AG04449 (cell line): ENCODE measurements at regions of chr17 and their contacts with region 1.

Region 1: DNA sequence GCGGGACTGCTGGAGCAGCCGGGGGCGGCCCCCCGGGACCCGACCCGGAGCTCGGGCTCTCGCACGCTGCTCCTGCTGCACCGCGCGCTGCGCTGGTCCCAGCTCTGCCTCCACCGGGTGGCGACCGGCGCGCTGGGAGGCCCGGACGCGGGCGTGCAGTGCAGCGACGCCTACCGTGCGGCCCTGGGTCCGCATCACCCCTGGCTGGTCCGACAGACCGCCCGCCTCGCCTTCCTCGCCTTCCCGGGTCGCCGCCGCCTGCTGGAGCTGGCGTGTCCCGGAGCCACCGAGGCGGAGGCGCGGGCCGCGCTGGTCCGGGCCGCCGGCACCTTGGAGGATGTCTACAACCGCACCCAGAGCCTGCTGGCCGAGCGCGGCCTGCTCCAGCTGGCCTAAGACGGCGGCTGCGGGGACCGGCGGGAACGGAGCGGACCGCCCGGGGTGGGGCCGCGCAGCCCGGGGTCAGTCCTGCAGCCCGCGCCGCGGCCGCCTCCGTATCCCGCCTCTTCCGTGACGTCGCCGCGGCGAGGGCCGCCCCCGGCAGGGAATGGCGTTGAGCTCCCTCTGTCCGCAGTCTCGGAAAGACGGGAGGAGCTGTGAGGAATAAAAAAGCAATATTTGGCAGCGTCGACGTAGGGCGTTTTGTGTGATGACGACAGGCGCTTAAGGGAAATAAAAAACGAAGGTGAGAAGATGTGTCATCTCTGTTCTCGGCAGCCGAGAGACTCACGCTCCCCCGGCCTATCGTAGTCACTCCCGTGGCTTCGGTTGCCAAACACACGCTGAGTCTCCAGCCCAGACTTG is 1.3 kb downstream of the GLTPD2 start:
- DNase-seq: peak; percentile 17
- H3K4me3 ChIP-seq: peak overlapping the region; percentile 67
- CTCF ChIP-seq: peak; percentile 93

Region 2: GRCh38 chr17:4394208-4395110 is 395.6 kb before region 1 on chr17:
- CTCF ChIA-PET with region 1: no interaction called
- POLR2A ChIA-PET with region 1: no interaction called
- DNase-seq: no peak
- H3K4me3 ChIP-seq: no peak overlapping the region
- CTCF ChIP-seq: no peak

Region 3: GRCh38 chr17:4733073-4733531 is 57.0 kb before region 1 on chr17:
- CTCF ChIA-PET with region 1: interaction called, 10 read pairs
- POLR2A ChIA-PET with region 1: no interaction called
- DNase-seq: no peak
- H3K4me3 ChIP-seq: no peak overlapping the region
- CTCF ChIP-seq: no peak

Region 4: DNA sequence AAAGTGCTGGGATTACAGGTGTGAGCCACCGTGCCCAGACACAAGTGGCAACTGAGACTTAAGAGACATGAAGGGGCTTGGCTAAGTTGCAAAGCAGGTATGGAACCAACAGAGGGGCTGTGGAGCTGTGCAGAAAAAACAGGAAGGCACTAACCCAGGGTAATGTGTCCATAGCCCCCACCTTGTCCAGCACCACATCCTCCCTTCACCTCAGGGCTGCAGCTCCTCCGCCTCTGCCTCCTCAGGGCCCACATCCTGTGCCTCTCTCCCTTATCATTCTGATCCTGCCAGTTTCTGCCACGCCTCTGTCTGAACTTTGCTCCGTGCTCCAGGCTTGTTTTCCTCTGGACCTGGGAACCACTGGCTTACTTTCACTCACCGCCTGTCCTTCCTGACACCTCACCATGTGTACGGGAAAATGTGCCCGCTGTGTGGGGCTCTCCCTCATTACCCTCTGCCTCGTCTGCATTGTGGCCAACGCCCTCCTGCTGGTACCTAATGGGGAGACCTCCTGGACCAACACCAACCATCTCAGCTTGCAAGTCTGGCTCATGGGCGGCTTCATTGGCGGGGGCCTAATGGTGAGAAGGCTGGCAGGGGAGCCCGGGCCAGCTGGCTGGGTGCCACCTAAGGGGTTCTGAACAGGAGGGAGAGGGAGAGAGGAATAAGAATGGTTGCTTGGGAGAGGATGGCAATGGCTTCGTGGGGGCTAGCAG is 18.4 kb before region 1 on chr17 and contains the start of gene TM4SF5:
- CTCF ChIA-PET with region 1: interaction called, 135 read pairs
- POLR2A ChIA-PET with region 1: no interaction called
- DNase-seq: no peak
- H3K4me3 ChIP-seq: no peak within 1 kb of the TSS
- CTCF ChIP-seq: no peak

Region 5: DNA sequence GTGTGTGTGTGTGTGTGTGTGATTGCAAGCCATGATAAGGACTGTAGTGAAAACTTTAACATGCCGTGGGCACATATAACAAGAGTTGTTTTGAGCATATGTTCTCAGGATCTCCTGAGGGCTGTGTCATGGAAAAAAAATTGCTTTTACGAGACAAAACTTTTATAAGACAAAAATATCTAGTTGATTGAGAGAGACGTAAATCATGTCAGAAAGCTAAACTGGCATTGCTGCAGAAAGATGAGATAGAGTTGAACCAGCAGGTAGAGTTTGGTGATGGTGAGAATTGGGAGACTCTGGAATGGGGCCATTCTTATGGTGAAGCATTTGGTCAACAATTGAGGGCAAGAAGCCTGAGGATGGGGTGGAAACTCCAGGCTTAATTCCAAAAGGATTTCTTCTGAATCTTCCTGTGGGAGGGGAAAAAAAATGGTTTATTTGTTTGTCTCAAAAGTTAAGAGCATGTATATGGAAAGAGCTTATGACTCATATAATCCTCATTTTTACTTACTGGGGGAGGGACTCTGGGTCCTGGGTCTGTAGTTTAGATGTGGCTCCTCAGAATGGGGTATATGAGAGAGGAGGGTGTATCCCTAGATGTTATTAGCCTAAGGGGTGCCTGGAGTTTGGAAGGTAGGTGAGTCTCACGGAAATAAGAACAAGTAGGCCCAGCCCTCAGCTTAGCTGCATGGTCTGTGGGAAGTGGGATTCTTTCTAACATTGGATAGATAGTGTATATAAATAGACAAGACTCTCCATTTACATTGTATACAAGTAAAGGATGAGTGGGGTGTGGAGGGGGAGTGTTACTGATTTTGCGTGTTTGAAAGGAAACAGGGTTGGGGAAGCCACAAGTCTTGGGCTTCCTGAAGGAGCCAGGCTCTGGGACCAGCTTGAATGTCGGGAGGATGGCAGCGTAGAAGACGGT is 50.1 kb after region 1 on chr17:
- CTCF ChIA-PET with region 1: interaction called, 11 read pairs
- POLR2A ChIA-PET with region 1: no interaction called
- DNase-seq: no peak
- H3K4me3 ChIP-seq: no peak overlapping the region
- CTCF ChIP-seq: no peak

Region 6: GRCh38 chr17:4891411-4892342 is 101.6 kb after region 1 on chr17:
- CTCF ChIA-PET with region 1: interaction called, 154 read pairs
- POLR2A ChIA-PET with region 1: no interaction called
- DNase-seq: no peak
- H3K4me3 ChIP-seq: no peak overlapping the region
- CTCF ChIP-seq: no peak

Region 7: DNA sequence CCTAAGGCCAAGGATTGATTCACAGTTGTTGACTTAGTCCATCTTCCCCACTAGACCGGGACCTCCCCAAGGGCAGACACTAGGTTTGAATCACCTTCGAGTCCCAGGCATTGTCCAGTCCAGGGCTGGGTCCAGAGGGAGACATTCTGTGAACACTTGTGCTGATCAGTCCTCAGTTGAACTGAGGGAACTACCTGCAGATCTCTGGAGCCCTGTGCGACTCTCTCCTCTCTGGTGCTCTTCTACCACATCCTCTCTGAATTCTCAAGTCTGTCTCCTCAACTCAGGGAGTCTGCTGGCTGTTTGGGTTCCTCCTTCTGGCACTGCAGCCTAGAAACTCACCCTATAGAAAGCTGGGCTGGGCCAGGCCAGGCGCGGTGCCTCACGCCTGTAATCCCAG is 310.7 kb after region 1 on chr17:
- CTCF ChIA-PET with region 1: no interaction called
- POLR2A ChIA-PET with region 1: no interaction called
- DNase-seq: no peak
- H3K4me3 ChIP-seq: no peak overlapping the region
- CTCF ChIP-seq: no peak